ENCODE measurements at regions of chr11 and their contacts with region 1.

Region 1: GRCh38 chr11:102390667-102391465 is 43.9 kb downstream of the BIRC2 start:
- DNase-seq: peak; percentile 50
- H3K4me3 ChIP-seq: no peak overlapping the region
- H3K27ac ChIP-seq: no peak overlapping the region
- H3K4me1 ChIP-seq: no peaks in the 10 kb centered on the region
- H3K27me3 ChIP-seq: no peaks in the 10 kb centered on the region
- CTCF ChIP-seq: peak; percentile 88 to 92

Region 2: GRCh38 chr11:102036757-102037156 is 354.1 kb before region 1 on chr11:
- CTCF ChIA-PET with region 1: no interaction called
- dilution Hi-C with region 1: no loop called
- in situ Hi-C with region 1: no loop called
- intact Hi-C with region 1: no loop called
- DNase-seq: no peak
- H3K4me3 ChIP-seq: no peak overlapping the region
- H3K27ac ChIP-seq: no peak overlapping the region
- H3K4me1 ChIP-seq: no peaks in the 10 kb centered on the region
- H3K27me3 ChIP-seq: no peaks in the 10 kb centered on the region
- CTCF ChIP-seq: no peak

Region 3: GRCh38 chr11:102317099-102317767 is 73.6 kb before region 1 on chr11 and contains the start of gene BIRC3:
- CTCF ChIA-PET with region 1: no interaction called
- dilution Hi-C with region 1: no loop called
- in situ Hi-C with region 1: no loop called
- intact Hi-C with region 1: no loop called
- DNase-seq: peak; percentile 99
- H3K4me3 ChIP-seq: peak within 1 kb of the TSS; percentile 35 to 56 (median 50)
- H3K27ac ChIP-seq: peak within 1 kb of the TSS; percentile 98
- H3K4me1 ChIP-seq: peaks cover 39% of the 10 kb centered on the region
- H3K27me3 ChIP-seq: no peaks in the 10 kb centered on the region
- CTCF ChIP-seq: peak in 1 of 2 donors; percentile 43
- total RNA-seq, gene BIRC3: 0.83 to 17.5 TPM

Region 4: DNA sequence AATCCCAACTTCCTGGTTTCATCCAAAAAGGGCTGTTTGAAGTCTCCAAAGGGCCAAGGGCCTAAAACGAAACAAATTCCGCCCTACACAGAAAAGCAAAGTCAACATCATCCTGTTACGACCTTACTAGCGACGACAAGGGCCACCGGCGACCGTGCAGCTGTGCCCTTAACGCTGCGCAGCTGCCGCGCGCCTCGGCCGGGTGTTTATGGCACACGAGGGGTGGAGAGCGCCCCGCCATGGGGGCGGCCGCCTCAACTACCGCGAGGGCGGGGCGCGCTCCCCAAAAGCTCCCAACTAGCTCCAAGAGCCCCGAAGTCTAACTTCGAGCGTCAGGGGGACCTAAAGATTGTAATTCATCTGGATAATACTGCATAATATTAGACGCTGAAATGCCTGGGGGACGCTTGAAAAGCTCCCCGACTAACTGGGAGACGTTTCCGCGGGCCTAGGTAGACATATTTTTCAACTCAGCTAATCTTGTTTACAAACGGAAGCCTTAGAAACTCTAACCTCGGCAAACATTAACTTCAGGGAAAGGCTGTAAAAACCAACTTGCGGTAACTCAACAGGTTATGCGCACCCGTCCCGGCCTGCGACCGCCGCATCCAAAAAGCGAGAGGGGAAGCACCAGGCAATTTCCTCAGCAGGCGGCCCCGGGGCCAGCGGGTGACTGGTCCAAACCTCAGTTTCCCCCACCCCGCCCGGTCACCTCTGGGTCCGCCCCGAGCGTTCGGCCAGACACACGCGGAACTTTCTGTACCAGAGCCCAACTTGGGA is 61.0 kb after region 1 on chr11:
- CTCF ChIA-PET with region 1: no interaction called
- dilution Hi-C with region 1: no loop called
- in situ Hi-C with region 1: no loop called
- intact Hi-C with region 1: loop called (anchors 2 kb)
- DNase-seq: peak; percentile 58
- H3K4me3 ChIP-seq: peak overlapping the region; percentile 86 to 92 (median 88)
- H3K27ac ChIP-seq: peak overlapping the region; percentile 75
- H3K4me1 ChIP-seq: peaks cover 44% of the 10 kb centered on the region
- H3K27me3 ChIP-seq: no peaks in the 10 kb centered on the region
- CTCF ChIP-seq: peak; percentile 3 to 25

Region 5: GRCh38 chr11:102599642-102600261 is 208.9 kb after region 1 on chr11:
- CTCF ChIA-PET with region 1: no interaction called
- dilution Hi-C with region 1: no loop called
- in situ Hi-C with region 1: loop called (anchors 25 kb)
- intact Hi-C with region 1: no loop called
- DNase-seq: peak; percentile 95
- H3K4me3 ChIP-seq: peak overlapping the region in 1 of 3 experiments; percentile 10
- H3K27ac ChIP-seq: peak overlapping the region; percentile 91
- H3K4me1 ChIP-seq: peaks cover 50% of the 10 kb centered on the region
- H3K27me3 ChIP-seq: no peaks in the 10 kb centered on the region
- CTCF ChIP-seq: no peak

Region 6: DNA sequence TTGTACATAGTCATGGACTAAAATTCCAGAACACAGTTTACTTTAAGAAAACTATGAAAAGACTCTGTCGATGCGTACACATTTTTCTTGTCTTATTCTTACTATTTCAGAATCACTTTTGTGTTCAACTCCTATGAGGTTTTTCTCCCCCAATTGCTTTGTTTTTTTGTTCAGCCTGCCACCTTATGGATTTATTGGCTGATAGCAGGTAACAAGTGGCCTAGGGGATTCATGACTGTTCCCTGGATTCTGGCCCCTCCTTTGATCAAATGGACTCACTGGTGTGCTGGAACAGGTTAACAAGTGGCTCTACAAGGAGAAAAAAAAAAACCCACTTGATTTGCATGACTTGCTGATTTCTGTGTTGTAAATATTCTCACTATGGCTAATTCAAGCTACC is 223.6 kb after region 1 on chr11:
- CTCF ChIA-PET with region 1: interaction called, 4 read pairs
- dilution Hi-C with region 1: no loop called
- in situ Hi-C with region 1: loop called (anchors 25 kb)
- intact Hi-C with region 1: loop called (anchors 5 kb)
- DNase-seq: no peak
- H3K4me3 ChIP-seq: no peak overlapping the region
- H3K27ac ChIP-seq: no peak overlapping the region
- H3K4me1 ChIP-seq: no peaks in the 10 kb centered on the region
- H3K27me3 ChIP-seq: no peaks in the 10 kb centered on the region
- CTCF ChIP-seq: peak; percentile 5 to 34

Region 7: DNA sequence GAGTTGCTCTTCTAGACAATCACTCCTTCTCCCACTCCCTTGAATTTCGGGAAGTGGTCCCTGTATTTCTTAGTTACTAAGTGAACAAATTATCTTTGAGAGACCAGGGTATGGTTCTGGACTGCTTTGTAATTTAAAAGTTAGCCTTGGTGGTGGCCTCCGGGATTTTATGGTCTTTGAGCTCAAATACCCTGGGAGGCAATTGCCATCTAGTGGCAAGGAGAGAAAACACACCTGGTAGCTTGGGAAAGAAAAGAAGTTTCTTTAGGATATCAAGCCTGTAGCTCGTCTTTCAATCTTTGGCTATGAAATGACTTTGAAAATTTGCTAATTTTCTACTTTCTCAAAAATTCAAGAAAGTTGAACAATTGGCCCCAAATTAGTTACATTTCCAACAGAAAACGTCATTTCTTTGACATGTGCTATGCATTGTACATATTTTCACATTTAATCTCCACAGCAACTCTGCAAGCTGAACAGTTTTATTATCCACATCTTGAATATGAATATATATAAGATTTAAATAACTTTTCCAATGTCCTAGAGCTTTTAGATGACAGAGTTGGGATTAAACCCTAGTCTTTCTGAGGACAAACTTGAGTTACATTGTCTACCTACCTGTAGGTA is 275.6 kb after region 1 on chr11:
- CTCF ChIA-PET with region 1: no interaction called
- dilution Hi-C with region 1: no loop called
- in situ Hi-C with region 1: no loop called
- intact Hi-C with region 1: loop called (anchors 1 kb)
- DNase-seq: peak; percentile 37
- H3K4me3 ChIP-seq: no peak overlapping the region
- H3K27ac ChIP-seq: no peak overlapping the region
- H3K4me1 ChIP-seq: no peaks in the 10 kb centered on the region
- H3K27me3 ChIP-seq: no peaks in the 10 kb centered on the region
- CTCF ChIP-seq: peak; percentile 89 to 92

Measured in mammary epithelial cell (primary cell).